AG04449 (cell line): ENCODE measurements at regions of chr11 and their contacts with region 1.

Region 1: GRCh38 chr11:123188508-123189165 is 6.4 kb downstream of the CLMP start:
- DNase-seq: no peak
- H3K4me3 ChIP-seq: peak overlapping the region; percentile 37
- CTCF ChIP-seq: peak; percentile 11

Region 2: GRCh38 chr11:123174196-123175183 is 14.1 kb before region 1 on chr11:
- CTCF ChIA-PET with region 1: interaction called, 16 read pairs
- POLR2A ChIA-PET with region 1: interaction called, 24 read pairs
- DNase-seq: peak; percentile 98
- H3K4me3 ChIP-seq: no peak overlapping the region
- CTCF ChIP-seq: no peak

Region 3: GRCh38 chr11:123338330-123339005 is 149.8 kb after region 1 on chr11:
- CTCF ChIA-PET with region 1: no interaction called
- POLR2A ChIA-PET with region 1: no interaction called
- DNase-seq: no peak
- H3K4me3 ChIP-seq: no peak overlapping the region
- CTCF ChIP-seq: no peak